Mammary epithelial cell (primary cell): ENCODE measurements at regions of chr5 and their contacts with region 1.

Region 1: GRCh38 chr5:1315709-1316587 is 21.1 kb upstream of the TERT start:
- DNase-seq: peak; percentile 75
- H3K4me3 ChIP-seq: no peak overlapping the region
- H3K27ac ChIP-seq: no peak overlapping the region
- H3K4me1 ChIP-seq: peaks cover 11% of the 10 kb centered on the region
- H3K27me3 ChIP-seq: no peaks in the 10 kb centered on the region
- CTCF ChIP-seq: no peak

Region 2: GRCh38 chr5:989961-990530 is 325.9 kb before region 1 on chr5:
- CTCF ChIA-PET with region 1: no interaction called
- dilution Hi-C with region 1: loop called (anchors 10 kb)
- in situ Hi-C with region 1: no loop called
- intact Hi-C with region 1: no loop called
- DNase-seq: no peak
- H3K4me3 ChIP-seq: no peak overlapping the region
- H3K27ac ChIP-seq: no peak overlapping the region
- H3K4me1 ChIP-seq: no peaks in the 10 kb centered on the region
- H3K27me3 ChIP-seq: peaks cover 5% of the 10 kb centered on the region
- CTCF ChIP-seq: peak in 1 of 2 donors; percentile 30

Region 3: GRCh38 chr5:1246711-1247431 is 69.1 kb before region 1 on chr5:
- CTCF ChIA-PET with region 1: no interaction called
- dilution Hi-C with region 1: loop called (anchors 10 kb)
- in situ Hi-C with region 1: no loop called
- intact Hi-C with region 1: no loop called
- DNase-seq: peak; percentile 24
- H3K4me3 ChIP-seq: no peak overlapping the region
- H3K27ac ChIP-seq: no peak overlapping the region
- H3K4me1 ChIP-seq: no peaks in the 10 kb centered on the region
- H3K27me3 ChIP-seq: no peaks in the 10 kb centered on the region
- CTCF ChIP-seq: no peak

Region 4: GRCh38 chr5:1409381-1410110 is 93.6 kb after region 1 on chr5:
- CTCF ChIA-PET with region 1: no interaction called
- dilution Hi-C with region 1: loop called (anchors 5 kb)
- in situ Hi-C with region 1: no loop called
- intact Hi-C with region 1: no loop called
- DNase-seq: peak; percentile 6
- H3K4me3 ChIP-seq: no peak overlapping the region
- H3K27ac ChIP-seq: no peak overlapping the region
- H3K4me1 ChIP-seq: no peaks in the 10 kb centered on the region
- H3K27me3 ChIP-seq: no peaks in the 10 kb centered on the region
- CTCF ChIP-seq: no peak

Region 5: DNA sequence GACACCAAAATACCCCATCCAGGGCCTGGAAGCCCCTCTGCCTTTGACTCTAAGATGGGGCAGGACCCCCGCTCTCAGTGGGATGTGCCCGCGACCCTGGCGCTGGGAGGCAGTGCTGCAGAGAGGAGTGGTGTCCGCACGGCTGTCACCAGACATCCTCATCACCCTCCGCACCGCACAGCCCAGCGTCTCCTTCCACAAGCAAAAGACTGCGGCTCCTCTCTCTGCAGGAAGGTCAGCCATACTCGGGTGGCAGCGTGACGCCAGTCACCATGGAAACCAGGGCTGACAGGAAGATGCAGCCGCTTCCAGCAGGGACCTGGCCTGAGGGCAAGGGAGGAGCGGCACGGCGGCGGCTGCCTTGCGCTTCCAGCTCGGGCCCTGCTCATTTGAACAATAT is 146.4 kb after region 1 on chr5:
- CTCF ChIA-PET with region 1: no interaction called
- dilution Hi-C with region 1: loop called (anchors 5 kb)
- in situ Hi-C with region 1: no loop called
- intact Hi-C with region 1: no loop called
- DNase-seq: no peak
- H3K4me3 ChIP-seq: no peak overlapping the region
- H3K27ac ChIP-seq: no peak overlapping the region
- H3K4me1 ChIP-seq: no peaks in the 10 kb centered on the region
- H3K27me3 ChIP-seq: no peaks in the 10 kb centered on the region
- CTCF ChIP-seq: no peak